ENCODE measurements at regions of chr4 and their contacts with region 1.

Region 1: GRCh38 chr4:674172-675035 is at the starts of genes ATP5ME and MYL5:
- DNase-seq: peak; percentile 96
- H3K4me3 Mint-ChIP-seq: peak within 1 kb of the TSS; percentile 83
- H3K27ac Mint-ChIP-seq: peak within 1 kb of the TSS; percentile 82
- H3K4me1 Mint-ChIP-seq: peaks cover 14% of the 10 kb centered on the region
- H3K27me3 Mint-ChIP-seq: no peaks in the 10 kb centered on the region
- CTCF ChIP-seq: peak; percentile 84
- total RNA-seq, gene ATP5ME: 355 and 389 TPM in 2 replicates
- total RNA-seq, gene MYL5: 30.6 and 32.9 TPM in 2 replicates

Region 2: DNA sequence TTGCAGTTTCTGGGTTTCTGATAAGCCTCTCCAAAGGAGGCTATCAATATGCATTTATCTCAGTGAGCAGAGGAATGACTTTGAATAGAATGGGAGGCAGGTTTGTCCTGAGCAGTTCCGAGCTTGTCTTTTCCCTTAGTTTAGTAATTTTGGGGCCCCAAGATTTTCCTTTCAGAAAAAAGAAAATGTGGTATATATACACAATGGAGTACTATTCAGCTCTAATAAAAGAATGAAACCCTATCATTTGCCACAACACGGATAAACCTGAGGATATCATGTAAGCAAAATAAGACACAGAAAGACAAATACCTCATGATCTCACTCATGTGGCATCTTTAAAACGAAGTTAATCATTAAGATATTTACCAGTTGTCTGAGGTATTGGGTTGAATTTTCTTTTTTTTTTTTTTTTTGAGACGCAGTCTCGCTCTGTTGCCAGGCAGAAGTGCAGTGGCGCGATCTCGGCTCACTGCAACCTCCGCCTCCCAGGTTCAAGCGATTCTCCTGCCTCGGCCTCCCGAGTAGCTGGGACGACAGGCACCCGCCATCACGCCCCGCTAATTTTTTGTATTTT is 176.0 kb before region 1 on chr4:
- CTCF ChIA-PET with region 1: no interaction called
- POLR2A ChIA-PET with region 1: interaction called, 19 read pairs
- intact Hi-C with region 1: no loop called
- DNase-seq: no peak
- H3K4me3 Mint-ChIP-seq: peak overlapping the region; percentile 98
- H3K27ac Mint-ChIP-seq: peak overlapping the region; percentile 100
- H3K4me1 Mint-ChIP-seq: peaks cover 12% of the 10 kb centered on the region
- H3K27me3 Mint-ChIP-seq: no peaks in the 10 kb centered on the region
- CTCF ChIP-seq: no peak

Region 3: DNA sequence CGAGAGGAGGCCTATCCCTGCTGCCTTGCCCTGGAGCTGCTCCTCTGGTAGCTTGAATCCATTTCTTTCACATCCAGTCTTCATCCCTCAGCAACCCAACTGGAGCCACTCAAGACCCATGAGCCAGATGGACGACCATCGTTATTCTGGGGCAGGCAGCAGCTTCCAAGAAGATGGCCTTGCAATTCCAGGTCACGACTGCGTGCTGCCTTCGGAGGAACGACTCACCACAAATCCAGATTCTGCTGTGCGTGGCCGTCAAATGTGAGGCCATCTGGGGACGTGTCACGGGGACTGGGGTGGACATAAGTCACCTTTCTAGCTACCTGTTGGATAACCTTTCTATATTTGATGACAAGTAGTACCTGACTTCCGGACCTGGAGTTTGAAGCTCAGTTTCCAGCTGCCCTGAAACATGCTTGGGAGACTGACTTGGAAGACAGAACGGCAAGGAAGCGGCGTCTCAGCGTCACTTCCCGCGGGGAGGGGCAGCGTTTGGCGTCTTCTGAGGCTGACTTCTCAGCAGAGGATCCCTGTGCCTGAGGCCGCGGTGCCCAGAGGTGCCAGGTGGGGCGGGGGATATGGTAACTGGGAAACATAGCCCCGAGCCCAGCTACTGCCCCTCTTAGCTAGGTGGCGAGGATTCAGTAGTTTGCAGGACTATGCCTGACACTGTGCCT is 86.6 kb before region 1 on chr4:
- CTCF ChIA-PET with region 1: no interaction called
- POLR2A ChIA-PET with region 1: no interaction called
- intact Hi-C with region 1: no loop called
- DNase-seq: no peak
- H3K4me3 Mint-ChIP-seq: no peak overlapping the region
- H3K27ac Mint-ChIP-seq: no peak overlapping the region
- H3K4me1 Mint-ChIP-seq: no peaks in the 10 kb centered on the region
- H3K27me3 Mint-ChIP-seq: peaks cover 49% of the 10 kb centered on the region
- CTCF ChIP-seq: no peak

Region 4: GRCh38 chr4:602559-602942 is 71.9 kb before region 1 on chr4:
- CTCF ChIA-PET with region 1: interaction called, 14 read pairs
- POLR2A ChIA-PET with region 1: interaction called, 11 read pairs
- intact Hi-C with region 1: loop called (anchors 1 kb)
- DNase-seq: peak; percentile 79
- H3K4me3 Mint-ChIP-seq: no peak overlapping the region
- H3K27ac Mint-ChIP-seq: no peak overlapping the region
- H3K4me1 Mint-ChIP-seq: peaks cover 6% of the 10 kb centered on the region
- H3K27me3 Mint-ChIP-seq: peaks cover 15% of the 10 kb centered on the region
- CTCF ChIP-seq: peak; percentile 97

Region 5: DNA sequence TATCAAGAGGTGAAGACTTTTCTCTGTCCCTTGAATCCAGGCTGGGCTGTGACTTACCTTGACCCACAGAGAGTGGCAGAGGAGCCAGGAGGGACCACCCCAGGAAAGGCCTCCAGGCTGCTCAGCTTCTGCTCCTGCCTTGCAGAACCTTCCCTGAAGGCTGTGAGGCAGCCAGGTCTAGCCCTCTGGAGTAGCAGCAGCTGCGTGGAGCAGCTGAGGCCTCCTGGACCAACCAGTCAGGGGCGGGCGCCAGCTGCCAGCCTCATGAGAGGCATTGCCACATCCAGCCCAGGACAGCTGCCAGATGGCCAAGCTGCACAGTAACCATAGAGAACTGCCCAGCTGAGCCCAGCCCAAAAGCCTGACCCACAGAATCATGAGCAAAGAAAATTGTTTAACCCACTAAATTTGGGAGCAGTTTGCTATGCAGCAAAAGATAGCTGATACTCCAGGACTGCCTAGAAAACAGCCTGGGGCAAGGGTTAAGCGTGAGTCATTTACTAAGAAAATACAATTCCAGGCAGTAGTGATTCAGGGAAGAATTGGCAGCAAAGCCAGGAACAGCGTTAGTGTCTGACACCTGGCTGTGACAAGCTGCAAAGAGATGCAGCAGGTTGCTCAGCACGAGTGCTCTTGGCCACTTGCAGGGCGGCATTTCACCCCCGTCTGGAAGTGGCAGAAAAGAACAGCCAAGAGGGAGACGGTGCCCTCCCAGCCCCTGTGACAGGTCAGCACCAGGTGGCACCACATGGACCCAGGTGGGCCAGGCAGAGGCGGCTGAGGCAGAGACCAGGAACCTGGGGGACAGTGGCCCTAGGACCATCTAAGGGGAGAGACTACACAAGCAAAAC is 63.8 kb before region 1 on chr4:
- CTCF ChIA-PET with region 1: interaction called, 6 read pairs
- POLR2A ChIA-PET with region 1: interaction called, 23 read pairs
- intact Hi-C with region 1: no loop called
- DNase-seq: peak; percentile 96
- H3K4me3 Mint-ChIP-seq: no peak overlapping the region
- H3K27ac Mint-ChIP-seq: peak overlapping the region; percentile 70
- H3K4me1 Mint-ChIP-seq: peaks cover 23% of the 10 kb centered on the region
- H3K27me3 Mint-ChIP-seq: peaks cover 35% of the 10 kb centered on the region
- CTCF ChIP-seq: no peak

Region 6: GRCh38 chr4:624705-625590 is 49.5 kb before region 1 on chr4 and contains the start of gene PDE6B:
- CTCF ChIA-PET with region 1: no interaction called
- POLR2A ChIA-PET with region 1: no interaction called
- intact Hi-C with region 1: no loop called
- DNase-seq: no peak
- H3K4me3 Mint-ChIP-seq: no peak within 1 kb of the TSS
- H3K27ac Mint-ChIP-seq: no peak within 1 kb of the TSS
- H3K4me1 Mint-ChIP-seq: no peaks in the 10 kb centered on the region
- H3K27me3 Mint-ChIP-seq: peaks cover 32% of the 10 kb centered on the region
- CTCF ChIP-seq: no peak
- total RNA-seq, gene PDE6B: not detected in 2 replicates

Region 7: GRCh38 chr4:687048-687970 is 12.9 kb after region 1 on chr4:
- CTCF ChIA-PET with region 1: interaction called, 6 read pairs
- POLR2A ChIA-PET with region 1: interaction called, 18 read pairs
- intact Hi-C with region 1: no loop called
- DNase-seq: peak; percentile 93
- H3K4me3 Mint-ChIP-seq: peak overlapping the region; percentile 64
- H3K27ac Mint-ChIP-seq: peak overlapping the region; percentile 91
- H3K4me1 Mint-ChIP-seq: peaks cover 11% of the 10 kb centered on the region
- H3K27me3 Mint-ChIP-seq: no peaks in the 10 kb centered on the region
- CTCF ChIP-seq: no peak

Region 8: GRCh38 chr4:700587-701264 is 26.3 kb after region 1 on chr4:
- CTCF ChIA-PET with region 1: interaction called, 3 read pairs
- POLR2A ChIA-PET with region 1: interaction called, 12 read pairs
- intact Hi-C with region 1: no loop called
- DNase-seq: no peak
- H3K4me3 Mint-ChIP-seq: no peak overlapping the region
- H3K27ac Mint-ChIP-seq: no peak overlapping the region
- H3K4me1 Mint-ChIP-seq: peaks cover 5% of the 10 kb centered on the region
- H3K27me3 Mint-ChIP-seq: no peaks in the 10 kb centered on the region
- CTCF ChIP-seq: no peak

Region 9: GRCh38 chr4:791871-792625 is 117.6 kb after region 1 on chr4:
- CTCF ChIA-PET with region 1: no interaction called
- POLR2A ChIA-PET with region 1: no interaction called
- intact Hi-C with region 1: no loop called
- DNase-seq: no peak
- H3K4me3 Mint-ChIP-seq: peak overlapping the region; percentile 21
- H3K27ac Mint-ChIP-seq: no peak overlapping the region
- H3K4me1 Mint-ChIP-seq: no peaks in the 10 kb centered on the region
- H3K27me3 Mint-ChIP-seq: no peaks in the 10 kb centered on the region
- CTCF ChIP-seq: no peak

Region 10: GRCh38 chr4:1200425-1201035 is 526.1 kb after region 1 on chr4:
- CTCF ChIA-PET with region 1: no interaction called
- POLR2A ChIA-PET with region 1: no interaction called
- intact Hi-C with region 1: no loop called
- DNase-seq: no peak
- H3K4me3 Mint-ChIP-seq: no peak overlapping the region
- H3K27ac Mint-ChIP-seq: no peak overlapping the region
- H3K4me1 Mint-ChIP-seq: peaks cover 5% of the 10 kb centered on the region
- H3K27me3 Mint-ChIP-seq: peaks cover 16% of the 10 kb centered on the region
- CTCF ChIP-seq: no peak

Measured in MCF 10A (cell line).